ENCODE measurements at regions of chr1 and their contacts with region 1.

Region 1: GRCh38 chr1:15152318-15153183 is 996 bp upstream of the TMEM51 start:
- DNase-seq: peak; percentile 87
- ATAC-seq: peak; percentile 69

Region 2: GRCh38 chr1:15272009-15272788 is 119.6 kb after region 1 on chr1:
- intact Hi-C with region 1: loop called (anchors 2 kb)
- DNase-seq: peak; percentile 57
- ATAC-seq: peak; percentile 94

Region 3: DNA sequence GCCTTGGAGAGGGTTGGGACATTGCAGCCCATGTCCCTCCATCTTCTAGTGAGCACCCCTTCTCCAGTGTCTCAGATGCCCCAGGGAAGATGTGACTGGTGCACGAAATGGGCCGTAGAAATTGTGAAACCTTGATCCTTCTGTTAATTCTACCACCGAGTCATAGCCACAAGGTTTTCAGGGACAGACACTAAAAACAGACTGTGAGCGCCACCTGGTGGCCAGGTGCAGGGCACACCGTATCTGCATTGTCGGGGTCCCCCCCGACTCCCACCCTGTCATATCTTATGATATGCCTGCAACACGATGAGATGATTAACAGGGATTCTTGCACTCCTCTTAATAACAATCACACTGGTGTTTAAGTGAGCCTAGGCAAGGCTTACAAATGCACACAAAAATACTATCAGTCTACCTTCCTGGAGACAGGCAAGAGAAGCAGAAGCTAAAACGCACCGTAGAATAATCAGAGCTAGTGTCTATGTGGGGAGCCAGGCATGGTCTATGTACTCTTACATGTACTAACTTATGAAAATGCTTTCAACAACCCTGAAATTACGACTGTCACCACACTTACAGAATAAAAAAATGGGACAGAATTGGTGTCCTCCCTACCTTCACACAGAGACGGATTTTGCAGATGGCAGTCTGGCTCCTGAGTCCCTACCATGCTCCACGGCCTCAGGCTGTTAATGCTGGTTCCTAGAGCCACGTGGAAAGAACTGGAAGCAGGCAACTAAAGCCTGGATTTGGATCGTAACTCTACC is 152.3 kb after region 1 on chr1:
- intact Hi-C with region 1: loop called (anchors 10 kb)
- DNase-seq: peak; percentile 79
- ATAC-seq: peak; percentile 73